ENCODE measurements at regions of chr2 and their contacts with region 1.

Region 1: DNA sequence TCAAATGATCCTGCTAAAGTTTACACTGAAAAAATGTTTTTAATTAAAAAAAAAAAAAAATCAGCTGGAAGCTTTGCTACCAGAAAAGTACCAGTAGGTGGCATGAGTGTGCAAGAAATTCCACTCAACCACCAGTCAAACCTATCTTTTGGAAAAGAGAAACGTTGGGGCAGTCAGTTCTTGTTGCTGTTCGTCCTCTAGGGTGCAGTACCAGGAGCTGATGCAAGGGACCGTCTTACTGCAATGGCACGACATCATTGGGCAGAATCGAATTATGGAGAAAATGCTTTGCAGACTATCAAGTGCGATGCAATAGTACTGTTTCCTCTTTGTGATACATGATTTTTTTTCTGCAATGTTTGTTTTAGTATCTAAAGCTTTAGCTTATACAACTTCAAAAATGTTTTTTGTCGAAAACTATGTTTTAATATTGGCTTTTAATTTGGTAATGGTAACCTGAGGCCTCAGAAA is 18.3 kb downstream of the YPEL5 start:
- DNase-seq: peak; percentile 77
- ATAC-seq: peak; percentile 100
- H3K4me3 Mint-ChIP-seq: no peak overlapping the region
- H3K27ac Mint-ChIP-seq: no peak overlapping the region
- H3K4me1 Mint-ChIP-seq: peaks cover 10% of the 10 kb centered on the region
- H3K27me3 Mint-ChIP-seq: no peaks in the 10 kb centered on the region

Region 2: DNA sequence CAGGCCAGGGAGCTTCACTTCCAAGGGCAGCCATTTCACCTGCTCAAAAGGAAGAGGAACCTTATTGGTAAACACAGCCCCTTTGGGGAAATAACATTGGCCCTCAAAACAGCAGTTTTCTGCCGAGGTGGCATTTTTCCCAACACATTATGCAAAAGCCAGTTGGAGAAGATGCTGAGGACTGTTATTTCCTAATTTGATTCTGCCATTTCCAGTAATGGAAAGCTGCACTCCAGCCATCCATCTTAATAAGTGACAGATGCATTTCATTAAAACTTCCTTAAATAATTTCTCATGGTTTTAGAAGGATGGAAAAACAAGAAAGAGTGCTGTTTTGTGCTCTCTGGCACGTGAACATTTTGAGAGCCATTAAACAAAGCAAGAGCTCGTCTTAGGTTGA is 187.8 kb before region 1 on chr2:
- CTCF ChIA-PET with region 1: no interaction called
- POLR2A ChIA-PET with region 1: no interaction called
- intact Hi-C with region 1: no loop called
- DNase-seq: no peak
- ATAC-seq: no peak
- H3K4me3 Mint-ChIP-seq: no peak overlapping the region
- H3K27ac Mint-ChIP-seq: no peak overlapping the region
- H3K4me1 Mint-ChIP-seq: no peaks in the 10 kb centered on the region
- H3K27me3 Mint-ChIP-seq: peaks cover 12% of the 10 kb centered on the region

Region 3: DNA sequence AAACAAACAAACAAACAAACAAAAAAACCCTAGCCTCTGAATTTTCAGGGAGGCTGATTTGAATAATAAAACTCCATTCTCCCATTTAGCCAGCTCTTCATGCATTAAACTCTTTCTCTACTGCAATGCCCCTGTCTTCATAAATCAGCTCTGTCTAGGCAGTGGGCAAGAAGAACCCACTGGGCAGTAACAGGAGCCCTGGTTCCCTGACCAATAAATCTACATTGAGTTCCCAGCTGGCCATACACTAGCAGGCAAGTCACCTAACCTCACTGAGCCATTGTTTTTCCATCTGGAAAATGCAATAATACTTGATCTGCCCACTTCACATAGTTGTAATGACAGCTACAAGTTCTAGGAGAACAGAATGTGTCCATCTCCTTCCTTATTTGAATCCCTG is 75.9 kb before region 1 on chr2:
- CTCF ChIA-PET with region 1: interaction called, 19 read pairs
- POLR2A ChIA-PET with region 1: no interaction called
- intact Hi-C with region 1: loop called (anchors 2 kb)
- DNase-seq: no peak
- ATAC-seq: no peak
- H3K4me3 Mint-ChIP-seq: no peak overlapping the region
- H3K27ac Mint-ChIP-seq: no peak overlapping the region
- H3K4me1 Mint-ChIP-seq: no peaks in the 10 kb centered on the region
- H3K27me3 Mint-ChIP-seq: peaks cover 26% of the 10 kb centered on the region

Region 4: GRCh38 chr2:30146438-30147147 is 18.5 kb before region 1 on chr2 and contains the start of gene YPEL5:
- CTCF ChIA-PET with region 1: interaction called, 114 read pairs
- POLR2A ChIA-PET with region 1: interaction called, 8 read pairs
- intact Hi-C with region 1: no loop called
- DNase-seq: peak; percentile 99
- ATAC-seq: peak; percentile 94
- H3K4me3 Mint-ChIP-seq: peak within 1 kb of the TSS; percentile 81
- H3K27ac Mint-ChIP-seq: peak within 1 kb of the TSS; percentile 96
- H3K4me1 Mint-ChIP-seq: peaks cover 55% of the 10 kb centered on the region
- H3K27me3 Mint-ChIP-seq: no peaks in the 10 kb centered on the region
- total RNA-seq, gene YPEL5: 27.2 to 35.8 TPM

Region 5: GRCh38 chr2:30217644-30218337 is 52.7 kb after region 1 on chr2:
- CTCF ChIA-PET with region 1: interaction called, 9 read pairs
- POLR2A ChIA-PET with region 1: interaction called, 3 read pairs
- intact Hi-C with region 1: loop called in 1 of 2 experiments (anchors 5 kb)
- DNase-seq: no peak
- ATAC-seq: peak; percentile 40
- H3K4me3 Mint-ChIP-seq: no peak overlapping the region
- H3K27ac Mint-ChIP-seq: no peak overlapping the region
- H3K4me1 Mint-ChIP-seq: peaks cover 43% of the 10 kb centered on the region
- H3K27me3 Mint-ChIP-seq: no peaks in the 10 kb centered on the region

Region 6: DNA sequence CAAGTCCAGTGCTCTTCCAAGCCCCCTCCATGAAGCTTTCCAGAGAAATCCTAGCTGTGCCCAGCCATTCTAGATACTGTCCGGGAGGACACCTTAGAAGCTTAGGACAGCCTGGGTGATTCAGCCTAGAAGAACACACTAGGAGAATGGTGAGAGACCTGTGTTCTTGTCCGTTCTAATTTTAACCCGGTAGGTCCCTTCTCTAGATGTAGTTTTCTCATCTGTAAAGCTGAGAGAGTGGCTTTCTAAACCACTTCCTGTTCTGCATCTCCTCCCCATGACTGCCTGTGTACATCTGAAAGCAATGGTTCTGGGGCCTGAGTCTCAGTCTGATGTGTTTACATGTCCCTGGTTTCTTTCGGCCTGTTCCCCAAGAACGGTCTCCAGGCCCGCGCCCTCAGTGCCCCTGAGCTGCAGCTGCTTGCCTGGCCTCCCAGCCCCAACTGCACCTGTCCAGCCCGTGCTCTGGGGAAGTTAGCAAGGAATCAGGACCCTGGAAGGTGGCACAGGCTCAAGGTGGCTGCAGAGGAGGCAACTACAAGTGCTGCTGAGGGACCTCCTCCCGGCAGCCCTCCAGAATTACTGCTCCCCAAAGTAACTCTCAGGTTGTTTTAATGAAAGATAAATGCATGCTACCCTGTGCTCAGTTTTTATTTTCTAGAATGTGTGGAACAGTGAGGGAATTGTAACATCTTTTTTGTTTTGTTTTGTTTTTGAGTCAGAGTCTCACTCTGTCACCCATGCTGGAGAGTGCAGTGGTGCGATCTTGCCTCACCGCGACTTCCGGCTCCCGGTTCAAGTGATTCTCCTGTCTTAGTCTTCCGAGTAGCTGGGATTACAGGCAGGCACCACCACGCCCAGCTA is 172.1 kb after region 1 on chr2:
- CTCF ChIA-PET with region 1: interaction called, 17 read pairs
- POLR2A ChIA-PET with region 1: no interaction called
- intact Hi-C with region 1: loop called in 1 of 2 experiments (anchors 5 kb)
- DNase-seq: peak; percentile 82
- ATAC-seq: peak; percentile 77
- H3K4me3 Mint-ChIP-seq: peak overlapping the region; percentile 56
- H3K27ac Mint-ChIP-seq: peak overlapping the region; percentile 98
- H3K4me1 Mint-ChIP-seq: peaks cover 81% of the 10 kb centered on the region
- H3K27me3 Mint-ChIP-seq: no peaks in the 10 kb centered on the region

Region 7: GRCh38 chr2:30511122-30512083 is 346.3 kb after region 1 on chr2:
- CTCF ChIA-PET with region 1: no interaction called
- POLR2A ChIA-PET with region 1: no interaction called
- intact Hi-C with region 1: no loop called
- DNase-seq: no peak
- ATAC-seq: no peak
- H3K4me3 Mint-ChIP-seq: no peak overlapping the region
- H3K27ac Mint-ChIP-seq: no peak overlapping the region
- H3K4me1 Mint-ChIP-seq: peaks cover 19% of the 10 kb centered on the region
- H3K27me3 Mint-ChIP-seq: no peaks in the 10 kb centered on the region

Region 8: DNA sequence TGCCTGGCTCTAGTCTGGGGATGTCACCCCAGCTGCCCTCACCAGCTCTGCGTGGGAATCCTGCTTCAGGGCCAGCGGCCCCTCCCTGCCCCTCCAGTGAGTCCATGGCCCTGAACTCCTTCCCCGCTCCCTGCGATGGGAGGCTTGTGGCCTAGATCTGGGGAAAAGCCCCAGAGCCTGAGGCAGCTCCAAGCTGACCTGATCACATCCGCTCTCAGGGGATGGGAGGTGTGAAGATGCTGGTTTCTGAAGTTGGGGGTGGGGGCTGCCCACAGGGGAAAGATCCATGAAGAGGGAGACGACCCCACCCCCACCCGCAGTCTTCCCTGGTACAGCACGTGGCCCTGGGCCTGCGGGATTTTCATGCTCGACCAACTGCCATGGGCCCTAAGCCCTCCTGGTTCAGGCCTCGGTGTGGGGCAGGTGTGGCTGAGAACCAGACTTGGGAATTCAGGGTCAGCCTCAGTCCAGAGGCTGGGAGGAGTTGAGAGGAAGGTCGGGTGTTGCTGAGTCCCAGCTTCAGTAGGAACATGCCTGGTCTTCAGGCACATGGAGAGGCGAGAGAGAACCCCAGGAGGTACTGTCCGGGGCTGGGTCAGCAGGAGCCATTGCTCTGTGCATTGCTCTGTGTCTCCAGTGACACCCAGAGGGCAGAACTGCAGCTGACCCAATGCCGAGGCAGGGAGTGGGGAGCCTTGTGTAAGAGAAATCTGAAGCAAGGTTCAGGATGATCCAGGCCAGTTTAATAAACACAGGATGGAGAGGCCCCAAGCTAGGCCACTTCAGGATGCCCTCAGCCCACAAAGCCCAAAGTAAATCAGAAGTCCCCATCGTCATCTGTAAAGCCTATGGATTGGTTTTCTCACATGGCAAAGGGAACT is 527.1 kb after region 1 on chr2:
- CTCF ChIA-PET with region 1: interaction called, 22 read pairs
- POLR2A ChIA-PET with region 1: no interaction called
- intact Hi-C with region 1: no loop called
- DNase-seq: peak; percentile 30
- ATAC-seq: no peak
- H3K4me3 Mint-ChIP-seq: no peak overlapping the region
- H3K27ac Mint-ChIP-seq: no peak overlapping the region
- H3K4me1 Mint-ChIP-seq: no peaks in the 10 kb centered on the region
- H3K27me3 Mint-ChIP-seq: no peaks in the 10 kb centered on the region